CD8-positive, alpha-beta memory T cell (primary cell): ENCODE measurements at regions of chr6 and their contacts with region 1.

Region 1: DNA sequence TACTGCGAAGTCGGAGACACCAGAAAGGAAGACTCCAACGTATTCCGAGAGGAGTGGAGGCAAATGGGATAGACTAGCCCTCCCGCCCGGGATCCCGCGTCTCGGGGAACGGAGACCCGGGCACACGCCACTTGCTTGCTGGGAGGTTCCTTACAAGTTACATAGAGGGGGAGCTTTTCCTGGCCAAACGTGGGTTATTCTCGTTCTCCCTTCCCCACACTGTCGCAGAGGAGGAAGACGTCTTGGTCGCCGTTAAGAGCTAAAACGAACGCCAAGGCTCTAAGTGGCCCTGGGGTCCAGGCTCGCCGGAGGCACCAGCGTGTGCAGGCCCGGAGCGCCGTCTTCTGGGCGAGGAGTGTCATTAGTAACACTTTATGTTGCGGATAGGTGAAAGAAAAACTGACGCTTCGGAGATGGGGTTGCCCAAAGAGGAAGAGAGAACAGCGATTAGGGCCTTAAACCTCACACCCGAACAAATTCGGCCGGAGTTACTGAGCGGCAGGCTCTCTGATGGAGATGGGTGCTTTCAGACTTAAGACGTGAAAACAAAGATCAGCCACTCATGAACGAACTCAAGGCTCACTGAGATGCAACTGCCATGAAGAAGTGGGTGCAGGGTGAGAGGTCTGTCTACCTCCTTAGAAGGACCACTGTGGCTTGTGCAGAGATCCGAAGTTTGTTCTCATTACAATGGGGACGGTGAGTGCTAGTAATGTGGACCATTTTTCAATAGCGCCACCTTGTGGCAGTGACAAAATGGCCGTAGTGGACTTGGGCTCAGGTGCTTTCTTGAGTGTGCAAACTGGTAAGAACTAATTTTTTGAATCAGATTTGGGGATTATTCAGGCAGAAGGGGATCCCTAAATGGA is 11.7 kb upstream of the ZNF311 start:
- DNase-seq: peak; percentile 70 to 87 (median 77)
- H3K4me3 ChIP-seq: peak overlapping the region; percentile 84
- H3K4me3 Mint-ChIP-seq: peak overlapping the region; percentile 80 to 91 (median 86)
- H3K27ac ChIP-seq: peak overlapping the region; percentile 28
- H3K27ac Mint-ChIP-seq: peak overlapping the region; percentile 24 to 84 (median 73)
- H3K4me1 ChIP-seq: peaks cover 12% of the 10 kb centered on the region
- H3K4me1 Mint-ChIP-seq: peaks cover 12 to 21% (median 19%) of the 10 kb centered on the region in 3 donors
- H3K27me3 ChIP-seq: no peaks in the 10 kb centered on the region
- H3K27me3 Mint-ChIP-seq: peaks cover 21 to 49% of the 10 kb centered on the region in 2 donors

Region 2: GRCh38 chr6:28683944-28684538 is 332.8 kb before region 1 on chr6:
- CTCF ChIA-PET with region 1: interaction called, 12 read pairs
- POLR2A ChIA-PET with region 1: no interaction called
- DNase-seq: peak in 2 of 5 donors; percentile 4 to 35
- H3K4me3 ChIP-seq: no peak overlapping the region
- H3K4me3 Mint-ChIP-seq: peak overlapping the region in 1 of 7 donors; percentile 2
- H3K27ac ChIP-seq: no peak overlapping the region
- H3K27ac Mint-ChIP-seq: no peak overlapping the region
- H3K4me1 ChIP-seq: no peaks in the 10 kb centered on the region
- H3K4me1 Mint-ChIP-seq: peaks cover 4 to 11% (median 10%) of the 10 kb centered on the region in 3 donors
- H3K27me3 ChIP-seq: peaks cover 3% of the 10 kb centered on the region
- H3K27me3 Mint-ChIP-seq: peaks cover 53 to 82% of the 10 kb centered on the region in 2 donors

Region 3: GRCh38 chr6:28940858-28941680 is 75.7 kb before region 1 on chr6:
- CTCF ChIA-PET with region 1: interaction called, 12 read pairs
- POLR2A ChIA-PET with region 1: no interaction called
- DNase-seq: peak; percentile 48 to 82 (median 81)
- H3K4me3 ChIP-seq: peak overlapping the region; percentile 84
- H3K4me3 Mint-ChIP-seq: peak overlapping the region; percentile 89 to 98 (median 93)
- H3K27ac ChIP-seq: peak overlapping the region; percentile 86
- H3K27ac Mint-ChIP-seq: peak overlapping the region; percentile 91 to 97 (median 94)
- H3K4me1 ChIP-seq: peaks cover 35% of the 10 kb centered on the region
- H3K4me1 Mint-ChIP-seq: peaks cover 42 to 58% (median 52%) of the 10 kb centered on the region in 3 donors
- H3K27me3 ChIP-seq: no peaks in the 10 kb centered on the region
- H3K27me3 Mint-ChIP-seq: peaks cover 0 to 20% of the 10 kb centered on the region in 2 donors

Region 4: DNA sequence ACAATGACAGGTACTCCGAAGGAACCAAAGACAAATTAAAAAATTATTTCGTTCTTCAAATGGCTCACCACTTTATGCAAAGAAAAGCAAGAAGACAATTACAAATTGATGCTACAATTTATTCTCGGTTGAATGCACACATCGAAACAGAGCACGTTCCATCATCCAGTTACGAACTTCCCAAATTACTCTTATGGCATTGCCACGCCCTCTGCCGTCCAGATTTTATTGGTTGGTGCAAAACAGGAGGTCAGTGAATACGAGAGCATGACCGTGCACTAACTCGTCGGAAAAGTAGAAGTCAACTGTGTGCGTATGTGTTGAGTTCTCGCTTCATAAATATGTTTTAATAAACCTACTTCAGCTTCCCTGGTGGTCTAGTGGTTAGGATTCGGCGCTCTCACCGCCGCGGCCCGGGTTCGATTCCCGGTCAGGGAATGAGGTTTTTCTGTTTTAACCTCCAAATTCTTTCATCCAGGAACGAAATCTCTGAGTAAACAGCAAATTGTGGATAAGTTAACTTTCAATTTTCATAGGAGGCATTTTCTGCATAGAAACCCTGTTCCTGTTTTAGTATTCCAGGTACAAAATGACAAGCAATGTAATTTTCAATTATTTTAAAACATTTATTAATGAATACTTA is 34.8 kb before region 1 on chr6:
- CTCF ChIA-PET with region 1: interaction called, 13 read pairs
- POLR2A ChIA-PET with region 1: no interaction called
- DNase-seq: peak; percentile 53 to 87 (median 81)
- H3K4me3 ChIP-seq: peak overlapping the region; percentile 99
- H3K4me3 Mint-ChIP-seq: peak overlapping the region; percentile 92 to 97 (median 95)
- H3K27ac ChIP-seq: peak overlapping the region; percentile 77
- H3K27ac Mint-ChIP-seq: peak overlapping the region; percentile 85 to 98 (median 94)
- H3K4me1 ChIP-seq: peaks cover 31% of the 10 kb centered on the region
- H3K4me1 Mint-ChIP-seq: peaks cover 53 to 78% (median 72%) of the 10 kb centered on the region in 3 donors
- H3K27me3 ChIP-seq: no peaks in the 10 kb centered on the region
- H3K27me3 Mint-ChIP-seq: peaks cover 43 to 49% of the 10 kb centered on the region in 2 donors